Panc1 (cell line): ENCODE measurements at regions of chr18 and their contacts with region 1.

Region 1: DNA sequence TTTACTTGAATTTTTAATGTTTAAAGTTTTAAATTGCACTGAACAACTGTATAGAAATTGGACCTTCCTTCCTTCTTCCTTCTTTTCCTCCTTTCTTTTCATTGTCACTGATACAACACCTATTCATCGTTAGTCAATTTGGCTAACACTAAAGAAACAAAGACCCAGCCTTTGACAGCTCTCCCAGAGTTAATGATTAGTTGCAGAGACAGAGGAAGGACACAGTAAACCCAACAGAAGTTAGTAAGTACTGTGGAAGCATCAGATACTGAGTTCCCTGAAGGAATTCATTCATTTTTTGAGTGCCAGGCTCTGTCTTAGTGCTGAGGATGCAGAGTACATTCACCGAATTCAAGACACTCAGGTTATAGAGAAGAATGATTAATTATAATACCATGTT is 77.9 kb upstream of the RAB27B start:
- DNase-seq: no peak
- ATAC-seq: no peak
- H3K4me3 ChIP-seq: no peak overlapping the region
- H3K27ac ChIP-seq: no peak overlapping the region
- H3K4me1 ChIP-seq: no peaks in the 10 kb centered on the region
- H3K27me3 ChIP-seq: no peaks in the 10 kb centered on the region
- CTCF ChIP-seq: no peak

Region 2: DNA sequence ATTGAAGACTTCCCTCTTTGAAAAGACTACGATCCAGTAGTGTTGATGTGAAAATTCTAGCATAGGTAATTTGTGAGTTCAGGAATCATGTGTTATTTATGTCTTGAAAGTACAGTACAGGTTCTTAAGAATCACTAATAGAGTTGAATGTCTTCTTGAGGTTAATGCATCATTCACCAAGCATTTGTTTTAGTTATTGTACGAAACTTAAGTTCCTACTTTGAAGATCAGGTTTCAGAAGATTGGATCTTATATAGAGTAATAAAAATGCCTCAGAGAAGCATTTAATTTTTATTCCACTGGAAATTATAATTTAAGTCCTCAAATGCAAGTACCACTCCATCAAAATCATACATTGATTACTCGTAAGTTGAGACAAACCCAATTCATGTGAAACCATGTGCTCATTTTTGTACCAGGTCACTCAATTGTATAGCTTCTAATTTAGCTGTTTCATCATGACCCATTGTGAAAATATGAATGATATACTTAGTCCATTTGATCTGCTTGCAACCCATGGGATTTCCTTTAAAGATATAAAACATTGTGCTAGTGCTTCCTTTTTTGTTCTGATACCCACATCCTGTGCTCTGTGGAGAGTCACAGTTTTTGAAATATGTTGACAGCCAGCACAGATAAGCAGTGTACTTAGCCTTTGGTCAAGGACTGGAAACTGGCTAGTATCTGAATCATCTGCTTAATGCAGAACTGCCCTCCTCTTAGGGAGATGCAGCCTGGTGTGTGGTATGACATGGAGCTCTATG is 55.4 kb after region 1 on chr18:
- CTCF ChIA-PET with region 1: interaction called, 11 read pairs
- POLR2A ChIA-PET with region 1: no interaction called
- in situ Hi-C with region 1: no loop called
- intact Hi-C with region 1: no loop called
- DNase-seq: no peak
- ATAC-seq: no peak
- H3K4me3 ChIP-seq: no peak overlapping the region
- H3K27ac ChIP-seq: no peak overlapping the region
- H3K4me1 ChIP-seq: no peaks in the 10 kb centered on the region
- H3K27me3 ChIP-seq: no peaks in the 10 kb centered on the region
- CTCF ChIP-seq: no peak